HCT116 (cell line): ENCODE measurements at regions of chr14 and their contacts with region 1.

Region 1: GRCh38 chr14:100305324-100306100 is 732 bp downstream of the SLC25A29 start:
- DNase-seq: no peak
- ATAC-seq: peak; percentile 8
- H3K4me3 ChIP-seq: peak overlapping the region; percentile 69 to 72
- H3K27ac ChIP-seq: peak overlapping the region; percentile 75
- H3K4me1 ChIP-seq: peaks cover 29 to 37% of the 10 kb centered on the region in 2 experiments
- H3K27me3 ChIP-seq: no peaks in the 10 kb centered on the region
- CTCF ChIP-seq: no peak
- POLR2A ChIP-seq: no peak
- RAD21 ChIP-seq: no peak

Region 2: GRCh38 chr14:100375963-100376735 is 70.6 kb after region 1 on chr14:
- CTCF ChIA-PET with region 1: no interaction called
- POLR2A ChIA-PET with region 1: no interaction called
- RAD21 ChIA-PET with region 1: interaction called in 1 of 2 experiments, 3 read pairs
- intact Hi-C with region 1: loop called (anchors 2 kb)
- DNase-seq: peak; percentile 83
- ATAC-seq: peak; percentile 92
- H3K4me3 ChIP-seq: peak within 1 kb of the TSS; percentile 70 to 75
- H3K27ac ChIP-seq: peak within 1 kb of the TSS; percentile 71
- H3K4me1 ChIP-seq: peaks cover 12 to 19% of the 10 kb centered on the region in 2 experiments; a peak in 3 of 4 replicates
- H3K27me3 ChIP-seq: no peaks in the 10 kb centered on the region
- CTCF ChIP-seq: no peak
- POLR2A ChIP-seq: peak; percentile 57
- RAD21 ChIP-seq: no peak